GM12878 (cell line): ENCODE measurements at regions of chr6 and their contacts with region 1.

Region 1: DNA sequence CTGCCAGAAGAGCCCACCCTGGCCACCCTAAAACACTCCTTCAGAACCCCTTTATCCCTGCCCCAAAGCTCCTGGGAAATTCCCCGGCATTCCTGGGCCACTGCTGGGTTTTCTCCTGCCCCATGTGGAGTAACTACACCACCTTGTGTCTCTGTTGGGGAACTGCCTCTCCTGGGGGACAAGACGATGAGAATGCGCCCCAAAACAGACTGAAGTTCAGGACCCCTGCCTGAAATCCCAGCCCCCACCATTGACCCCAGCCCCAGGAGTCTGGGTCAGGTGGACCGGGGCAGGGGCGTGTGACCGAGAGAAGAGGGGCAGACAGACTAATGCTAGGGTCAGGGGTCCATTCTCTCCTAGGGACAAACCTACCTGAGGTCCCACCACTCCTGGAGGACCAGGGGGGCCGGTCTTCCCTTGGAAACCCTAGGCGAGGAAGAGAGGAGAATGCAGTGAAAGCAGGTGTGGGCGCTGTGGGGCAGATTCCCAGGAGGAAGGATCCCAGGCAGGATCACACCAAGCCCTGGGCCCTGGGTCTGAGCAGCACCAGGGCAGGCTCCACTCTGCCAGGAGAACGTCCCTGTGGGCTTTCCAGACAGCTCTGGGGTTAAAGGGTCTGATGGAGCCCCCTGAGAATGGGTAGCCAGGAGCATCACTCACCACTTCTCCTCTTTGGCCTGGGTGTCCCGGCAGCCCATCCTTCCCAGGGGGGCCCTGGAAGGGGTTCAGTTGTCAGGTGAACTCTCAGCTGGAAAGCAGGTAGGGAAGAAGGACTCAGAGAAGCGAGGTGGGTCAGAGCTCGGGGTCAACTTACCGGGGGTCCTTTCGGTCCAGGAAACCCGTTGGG is 19.4 kb downstream of the COL11A2 start:
- DNase-seq: no peak
- ATAC-seq: peak; percentile 39
- H3K4me3 ChIP-seq: no peak overlapping the region
- H3K27ac ChIP-seq: no peak overlapping the region
- H3K4me1 ChIP-seq: no peaks in the 10 kb centered on the region; the same call in 1 of the 2 replicates
- H3K27me3 ChIP-seq: no peaks in the 10 kb centered on the region
- CTCF ChIP-seq: peak; percentile 80 to 83 (median 83)
- EP300 ChIP-seq: no peak
- POLR2A ChIP-seq: no peak
- RAD21 ChIP-seq: peak; percentile 96

Region 2: DNA sequence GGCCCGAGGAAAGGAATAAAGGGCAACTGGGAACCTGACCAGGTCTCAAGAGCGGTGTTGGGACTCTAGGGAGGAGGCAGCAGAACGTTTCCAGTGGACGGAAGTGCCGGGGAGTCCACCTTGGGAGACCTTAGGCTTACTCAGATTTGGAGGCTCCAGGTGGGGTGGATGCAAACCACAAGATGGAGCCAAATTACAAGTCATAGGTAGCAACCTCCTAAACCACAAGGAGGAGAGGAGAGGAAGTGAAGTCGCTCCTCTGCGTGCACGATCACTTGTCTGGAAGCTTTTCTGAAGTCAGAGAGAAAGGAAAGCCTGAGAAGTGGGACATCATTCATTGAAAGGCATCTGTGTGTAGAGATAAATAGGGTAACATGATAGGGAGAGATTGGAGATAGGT is 172.9 kb before region 1 on chr6:
- CTCF ChIA-PET with region 1: interaction called, 10 read pairs
- POLR2A ChIA-PET with region 1: no interaction called
- RAD21 ChIA-PET with region 1: interaction called, 4 read pairs
- SMC1A ChIA-PET with region 1: interaction called, 3 read pairs
- in situ Hi-C with region 1: no loop called
- intact Hi-C with region 1: no loop called
- DNase-seq: no peak
- ATAC-seq: peak; percentile 89
- H3K4me3 ChIP-seq: no peak overlapping the region
- H3K27ac ChIP-seq: no peak overlapping the region
- H3K4me1 ChIP-seq: peaks cover 7% of the 10 kb centered on the region; the same call in 1 of the 2 replicates
- H3K27me3 ChIP-seq: no peaks in the 10 kb centered on the region
- CTCF ChIP-seq: peak; percentile 51 to 60 (median 53)
- EP300 ChIP-seq: no peak
- POLR2A ChIP-seq: no peak
- RAD21 ChIP-seq: peak; percentile 73

Region 3: DNA sequence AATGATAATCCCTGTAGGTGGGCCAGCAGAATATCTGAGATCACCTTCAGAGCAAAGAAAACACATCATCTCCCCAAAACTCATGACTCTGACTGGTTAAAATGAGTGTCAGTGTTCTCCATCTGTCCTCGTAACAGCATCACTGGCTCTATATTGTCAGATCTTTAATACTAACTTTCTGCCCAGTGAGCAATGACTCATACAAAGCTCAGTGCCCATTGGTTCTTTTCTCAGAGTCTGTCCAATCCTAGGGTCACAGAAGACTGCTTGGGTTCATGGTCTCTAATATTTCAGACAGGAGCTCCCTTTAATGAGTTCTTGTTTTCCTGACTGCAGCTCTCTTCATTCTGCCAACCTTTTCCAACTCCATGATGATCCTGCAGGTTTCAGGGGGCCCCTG is 60.8 kb before region 1 on chr6:
- CTCF ChIA-PET with region 1: interaction called, 58 read pairs
- POLR2A ChIA-PET with region 1: interaction called, 4 read pairs
- RAD21 ChIA-PET with region 1: interaction called, 5 read pairs
- SMC1A ChIA-PET with region 1: interaction called, 7 read pairs
- in situ Hi-C with region 1: no loop called
- intact Hi-C with region 1: no loop called
- DNase-seq: peak; percentile 68
- ATAC-seq: peak; percentile 97
- H3K4me3 ChIP-seq: no peak overlapping the region
- H3K27ac ChIP-seq: peak overlapping the region; percentile 41
- H3K4me1 ChIP-seq: peaks cover 40% of the 10 kb centered on the region
- H3K27me3 ChIP-seq: no peaks in the 10 kb centered on the region; a peak in 2 of 4 replicates
- CTCF ChIP-seq: no peak
- EP300 ChIP-seq: no peak
- POLR2A ChIP-seq: no peak
- RAD21 ChIP-seq: no peak

Region 4: DNA sequence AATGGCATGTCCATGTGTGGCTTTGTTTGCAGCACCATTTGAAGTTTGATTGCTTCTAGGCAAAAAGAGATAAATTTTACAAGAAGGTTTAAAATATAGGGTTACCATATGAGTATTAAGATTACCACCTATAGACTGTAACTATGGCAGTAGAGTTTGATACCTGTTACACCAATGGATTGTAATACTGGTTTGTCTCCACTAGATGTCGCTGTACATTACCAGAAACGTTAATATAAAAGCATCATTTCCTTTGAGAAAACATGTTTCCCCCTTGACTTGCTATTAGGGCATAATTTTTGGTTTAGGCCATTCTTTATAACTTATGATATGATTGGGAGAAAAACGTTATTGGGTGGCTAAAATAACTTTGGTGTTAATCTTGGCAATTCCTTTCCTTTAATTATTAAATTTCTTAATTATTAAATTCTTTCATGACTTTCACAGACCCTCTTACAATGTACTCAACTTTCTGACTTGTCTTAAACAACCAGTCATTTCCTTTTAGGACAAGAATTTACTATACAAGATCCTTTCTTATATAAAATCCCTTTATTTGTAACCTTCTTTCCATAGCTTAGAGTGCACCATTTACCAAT is 54.3 kb before region 1 on chr6:
- CTCF ChIA-PET with region 1: interaction called, 58 read pairs
- POLR2A ChIA-PET with region 1: interaction called, 4 read pairs
- RAD21 ChIA-PET with region 1: interaction called, 5 read pairs
- SMC1A ChIA-PET with region 1: interaction called, 15 read pairs
- in situ Hi-C with region 1: no loop called
- intact Hi-C with region 1: loop called (anchors 2 kb)
- DNase-seq: no peak
- ATAC-seq: peak; percentile 45
- H3K4me3 ChIP-seq: no peak overlapping the region
- H3K27ac ChIP-seq: no peak overlapping the region
- H3K4me1 ChIP-seq: peaks cover 36% of the 10 kb centered on the region
- H3K27me3 ChIP-seq: peaks cover 0 to 2% of the 10 kb centered on the region in 2 experiments; a peak in 2 of 4 replicates
- CTCF ChIP-seq: peak; percentile 53 to 66 (median 61); a peak in 5 of 6 replicates
- EP300 ChIP-seq: no peak
- POLR2A ChIP-seq: no peak
- RAD21 ChIP-seq: peak; percentile 62

Region 5: GRCh38 chr6:33161354-33162331 is 11.3 kb before region 1 on chr6:
- CTCF ChIA-PET with region 1: interaction called, 46 read pairs
- POLR2A ChIA-PET with region 1: interaction called, 3 read pairs
- RAD21 ChIA-PET with region 1: interaction called, 27 read pairs
- SMC1A ChIA-PET with region 1: interaction called, 27 read pairs
- in situ Hi-C with region 1: no loop called
- intact Hi-C with region 1: no loop called
- DNase-seq: no peak
- ATAC-seq: peak; percentile 96
- H3K4me3 ChIP-seq: peak overlapping the region; percentile 70; the same call in 1 of the 2 replicates
- H3K27ac ChIP-seq: no peak overlapping the region
- H3K4me1 ChIP-seq: peaks cover 4% of the 10 kb centered on the region
- H3K27me3 ChIP-seq: no peaks in the 10 kb centered on the region
- CTCF ChIP-seq: peak; percentile 89 to 97 (median 96); a peak in 5 of 6 replicates
- EP300 ChIP-seq: no peak
- POLR2A ChIP-seq: no peak
- RAD21 ChIP-seq: peak; percentile 64

Region 6: GRCh38 chr6:33200219-33201146 is 27.6 kb after region 1 on chr6 and contains the starts of genes RXRB and SLC39A7:
- CTCF ChIA-PET with region 1: interaction called, 15 read pairs
- POLR2A ChIA-PET with region 1: interaction called, 4 read pairs
- RAD21 ChIA-PET with region 1: interaction called, 6 read pairs
- SMC1A ChIA-PET with region 1: interaction called, 3 read pairs
- in situ Hi-C with region 1: no loop called
- intact Hi-C with region 1: no loop called
- DNase-seq: peak; percentile 99
- ATAC-seq: peak; percentile 77
- H3K4me3 ChIP-seq: peak within 1 kb of the TSS; percentile 95
- H3K27ac ChIP-seq: peak within 1 kb of the TSS; percentile 99
- H3K4me1 ChIP-seq: peaks cover 33% of the 10 kb centered on the region
- H3K27me3 ChIP-seq: no peaks in the 10 kb centered on the region
- CTCF ChIP-seq: no peak
- EP300 ChIP-seq: peak in 1 of 2 experiments; percentile 12; a peak in 1 of 4 replicates
- POLR2A ChIP-seq: peak; percentile 95
- RAD21 ChIP-seq: no peak
- polyA plus RNA-seq, gene RXRB: 0.71 to 1.6 TPM
- polyA plus RNA-seq, gene SLC39A7: 7.3 to 8.4 TPM